Activated CD4-positive, alpha-beta memory T cell treated with anti-CD3 and anti-CD28 coated beads for 36 hours (primary cell): ENCODE measurements at regions of chr22 and their contacts with region 1.

Region 1: DNA sequence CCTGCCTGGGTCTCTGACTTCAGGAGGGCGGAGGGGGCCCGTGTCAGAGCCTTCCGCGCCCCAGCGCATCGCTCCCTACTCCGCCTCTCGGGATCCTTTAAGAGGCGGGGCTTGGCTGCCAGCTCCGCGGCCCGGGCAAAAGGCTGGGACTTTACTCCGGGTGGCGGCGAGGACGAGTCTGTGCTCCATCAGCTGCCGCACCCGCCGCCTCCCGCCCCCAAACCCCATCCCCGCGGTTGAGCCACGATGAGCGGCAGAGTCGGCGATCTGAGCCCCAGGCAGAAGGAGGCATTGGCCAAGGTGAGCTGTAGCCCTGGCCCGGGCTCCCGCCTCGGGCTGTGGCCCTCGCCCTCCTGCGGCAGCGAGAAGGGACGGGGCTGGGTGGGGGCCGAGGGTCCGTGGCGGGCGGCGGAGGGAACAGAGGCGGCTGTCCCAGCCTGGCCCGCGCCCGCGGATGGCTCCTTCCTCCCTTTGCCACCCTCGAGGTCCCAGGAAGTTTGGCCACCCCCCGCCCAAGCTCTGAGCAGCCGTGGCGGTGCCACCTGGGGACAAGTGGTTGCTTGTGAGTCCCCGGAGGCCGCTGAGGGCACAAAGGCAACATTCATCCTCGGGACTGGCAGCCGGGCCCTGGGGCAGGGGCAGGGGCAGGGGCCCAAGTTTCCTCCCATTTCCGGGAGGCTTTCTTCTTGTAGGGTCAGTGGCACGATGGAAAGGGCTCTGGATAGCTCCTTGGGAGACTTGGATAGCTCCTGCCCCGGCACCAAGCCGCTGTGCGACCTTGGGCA is at the start of gene SEC14L2:
- DNase-seq: peak; percentile 74
- H3K4me3 Mint-ChIP-seq: peak within 1 kb of the TSS; percentile 86
- H3K27ac Mint-ChIP-seq: no peak within 1 kb of the TSS
- H3K4me1 Mint-ChIP-seq: peaks cover 29% of the 10 kb centered on the region
- H3K27me3 Mint-ChIP-seq: no peaks in the 10 kb centered on the region
- total RNA-seq, gene SEC14L2: 12.8 to 15.3 TPM

Region 2: GRCh38 chr22:29641042-29641699 is 755.9 kb before region 1 on chr22:
- CTCF ChIA-PET with region 1: no interaction called
- POLR2A ChIA-PET with region 1: no interaction called
- intact Hi-C with region 1: loop called (anchors 5 kb)
- DNase-seq: no peak
- H3K4me3 Mint-ChIP-seq: no peak overlapping the region
- H3K27ac Mint-ChIP-seq: peak overlapping the region; percentile 61
- H3K4me1 Mint-ChIP-seq: peaks cover 16% of the 10 kb centered on the region
- H3K27me3 Mint-ChIP-seq: no peaks in the 10 kb centered on the region

Region 3: DNA sequence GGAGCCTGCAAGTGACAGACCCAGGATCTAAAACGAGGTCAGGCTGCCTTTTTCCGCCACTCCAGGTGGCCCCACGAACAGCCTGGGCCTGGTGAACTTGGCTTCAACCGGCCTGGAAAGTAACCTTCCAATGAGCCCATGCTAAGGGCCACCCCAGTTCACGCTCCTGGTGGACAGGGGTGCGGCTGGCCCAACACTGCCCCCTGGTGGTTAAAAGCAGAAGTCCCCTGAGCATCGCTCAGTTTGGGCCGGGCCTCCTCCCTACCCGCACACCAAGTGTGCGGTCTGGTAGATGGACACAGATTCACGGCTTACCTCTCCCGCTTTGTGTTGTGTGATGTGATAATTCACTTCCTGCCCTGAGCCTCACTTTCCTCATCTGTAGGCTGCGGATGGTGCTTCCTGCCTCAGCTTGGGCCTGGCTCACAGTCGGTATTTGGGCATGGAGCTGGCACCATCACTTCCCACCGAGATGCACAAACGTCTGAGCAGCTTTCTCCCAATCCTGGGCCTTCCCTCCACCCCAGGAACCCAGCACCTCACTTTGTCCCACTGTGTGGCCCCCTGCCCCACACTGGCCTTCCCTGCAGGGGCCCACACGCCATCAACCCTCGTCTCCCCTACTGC is 88.4 kb after region 1 on chr22:
- CTCF ChIA-PET with region 1: interaction called, 98 read pairs
- POLR2A ChIA-PET with region 1: no interaction called
- intact Hi-C with region 1: no loop called
- DNase-seq: peak; percentile 83
- H3K4me3 Mint-ChIP-seq: no peak overlapping the region
- H3K27ac Mint-ChIP-seq: no peak overlapping the region
- H3K4me1 Mint-ChIP-seq: no peaks in the 10 kb centered on the region
- H3K27me3 Mint-ChIP-seq: no peaks in the 10 kb centered on the region